Right lobe of liver (tissue), 6 donors: ENCODE measurements at regions of chr20 and their contacts with region 1.

Region 1: GRCh38 chr20:38178065-38178491 is 13.0 kb upstream of the TGM2 start:
- DNase-seq: no peak
- ATAC-seq: no peak
- H3K4me3 ChIP-seq: no peak overlapping the region
- H3K27ac ChIP-seq: no peak overlapping the region
- H3K4me1 ChIP-seq: no peaks in the 10 kb centered on the region
- H3K27me3 ChIP-seq: no peaks in the 10 kb centered on the region
- CTCF ChIP-seq: no peak
- POLR2A ChIP-seq: no peak

Region 2: GRCh38 chr20:38222231-38222922 is 44.3 kb after region 1 on chr20:
- intact Hi-C with region 1: loop called in 1 of 2 experiments (anchors 5 kb)
- DNase-seq: peak; percentile 64 to 78 (median 67)
- ATAC-seq: peak; percentile 75 to 84 (median 81)
- H3K4me3 ChIP-seq: no peak overlapping the region
- H3K27ac ChIP-seq: no peak overlapping the region
- H3K4me1 ChIP-seq: peaks cover 0 to 5% (median 0%) of the 10 kb centered on the region in 4 donors
- H3K27me3 ChIP-seq: no peaks in the 10 kb centered on the region
- CTCF ChIP-seq: peak; percentile 87 to 92 (median 90)
- POLR2A ChIP-seq: no peak

Region 3: GRCh38 chr20:38412877-38413577 is 234.9 kb after region 1 on chr20:
- intact Hi-C with region 1: no loop called
- DNase-seq: no peak
- ATAC-seq: no peak
- H3K4me3 ChIP-seq: no peak overlapping the region
- H3K27ac ChIP-seq: no peak overlapping the region
- H3K4me1 ChIP-seq: no peaks in the 10 kb centered on the region
- H3K27me3 ChIP-seq: no peaks in the 10 kb centered on the region
- CTCF ChIP-seq: no peak
- POLR2A ChIP-seq: no peak